Mammary epithelial cell (primary cell): ENCODE measurements at regions of chr16 and their contacts with region 1.

Region 1: GRCh38 chr16:10964039-10964890 is 19.9 kb downstream of the CLEC16A start:
- DNase-seq: peak; percentile 77
- H3K4me3 ChIP-seq: no peak overlapping the region
- H3K27ac ChIP-seq: no peak overlapping the region
- H3K4me1 ChIP-seq: peaks cover 16% of the 10 kb centered on the region
- H3K27me3 ChIP-seq: no peaks in the 10 kb centered on the region
- CTCF ChIP-seq: peak; percentile 96 to 99

Region 2: DNA sequence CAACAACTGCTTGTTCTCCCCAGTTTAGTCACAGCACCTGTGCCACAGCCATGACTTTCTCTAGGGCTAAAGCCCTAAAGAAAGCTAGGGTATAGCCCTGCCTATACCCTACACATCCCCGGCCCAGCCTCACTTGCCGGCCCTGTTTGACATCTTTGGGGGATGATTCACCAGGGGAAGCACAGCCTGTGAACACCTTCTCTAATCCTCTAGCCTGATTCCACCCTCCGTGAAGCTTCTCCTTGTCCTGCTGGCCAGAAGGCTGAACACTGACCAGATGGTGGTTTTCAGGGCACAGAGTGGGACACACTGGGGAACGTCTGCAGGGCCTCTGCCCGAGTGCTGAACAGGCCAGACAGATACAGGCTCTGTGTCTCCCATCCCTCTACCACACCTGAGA is 13.9 kb before region 1 on chr16:
- CTCF ChIA-PET with region 1: no interaction called
- dilution Hi-C with region 1: no loop called
- in situ Hi-C with region 1: no loop called
- intact Hi-C with region 1: loop called (anchors 1 kb)
- DNase-seq: peak; percentile 72
- H3K4me3 ChIP-seq: no peak overlapping the region
- H3K27ac ChIP-seq: peak overlapping the region; percentile 8
- H3K4me1 ChIP-seq: peaks cover 52% of the 10 kb centered on the region
- H3K27me3 ChIP-seq: no peaks in the 10 kb centered on the region
- CTCF ChIP-seq: no peak

Region 3: GRCh38 chr16:11370084-11370931 is 406.0 kb after region 1 on chr16:
- CTCF ChIA-PET with region 1: no interaction called
- dilution Hi-C with region 1: no loop called
- in situ Hi-C with region 1: loop called in 1 of 2 experiments (anchors 10 kb)
- intact Hi-C with region 1: loop called (anchors 1 kb)
- DNase-seq: no peak
- H3K4me3 ChIP-seq: no peak overlapping the region
- H3K27ac ChIP-seq: no peak overlapping the region
- H3K4me1 ChIP-seq: no peaks in the 10 kb centered on the region
- H3K27me3 ChIP-seq: no peaks in the 10 kb centered on the region
- CTCF ChIP-seq: no peak

Region 4: DNA sequence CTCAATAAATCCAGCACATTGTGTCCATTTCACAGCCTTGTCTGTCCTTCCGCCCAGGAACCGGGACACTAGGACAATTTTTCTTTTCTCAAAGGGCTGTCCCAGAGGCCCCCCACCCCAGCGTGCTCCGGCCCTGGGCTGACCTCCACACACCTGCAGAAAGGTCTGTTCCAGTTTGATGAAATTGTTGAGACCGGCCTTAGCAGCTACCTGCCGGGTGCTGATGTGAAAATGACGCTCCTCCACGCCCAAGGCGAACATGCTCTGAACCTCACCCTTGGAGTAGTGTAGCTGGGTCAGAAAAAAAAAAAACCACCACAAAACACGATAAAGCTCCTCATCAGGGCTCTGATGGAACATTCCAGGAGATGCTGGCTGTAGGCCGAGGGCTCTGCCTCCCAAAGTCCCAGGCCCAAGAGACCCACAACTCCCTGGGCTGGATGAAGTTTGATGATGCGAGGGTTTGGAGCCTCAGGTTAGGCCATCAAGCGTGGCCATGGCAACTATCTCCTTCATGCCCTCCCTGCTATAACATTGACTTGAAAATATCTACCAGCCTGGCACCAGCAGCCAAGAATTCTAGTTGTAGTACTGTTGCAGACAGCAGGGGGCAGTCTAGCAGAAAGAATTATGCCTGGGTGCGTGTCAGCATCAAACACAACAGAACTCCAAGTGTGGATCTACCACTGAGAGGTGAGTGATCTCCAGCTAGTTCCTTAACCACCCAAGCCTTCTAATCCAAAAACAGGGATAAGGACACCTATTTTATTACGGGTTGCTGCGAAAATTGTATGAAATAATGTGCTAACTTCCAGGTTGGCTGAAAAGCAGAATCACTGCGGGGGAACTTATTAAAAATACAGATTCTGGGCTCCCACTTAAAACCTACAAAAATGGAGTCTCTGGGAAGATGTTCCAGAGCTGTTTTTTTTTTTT is 443.1 kb after region 1 on chr16:
- CTCF ChIA-PET with region 1: no interaction called
- dilution Hi-C with region 1: no loop called
- in situ Hi-C with region 1: no loop called
- intact Hi-C with region 1: loop called (anchors 1 kb)
- DNase-seq: peak; percentile 65
- H3K4me3 ChIP-seq: no peak overlapping the region
- H3K27ac ChIP-seq: no peak overlapping the region
- H3K4me1 ChIP-seq: no peaks in the 10 kb centered on the region
- H3K27me3 ChIP-seq: no peaks in the 10 kb centered on the region
- CTCF ChIP-seq: peak; percentile 76 to 77

Region 5: DNA sequence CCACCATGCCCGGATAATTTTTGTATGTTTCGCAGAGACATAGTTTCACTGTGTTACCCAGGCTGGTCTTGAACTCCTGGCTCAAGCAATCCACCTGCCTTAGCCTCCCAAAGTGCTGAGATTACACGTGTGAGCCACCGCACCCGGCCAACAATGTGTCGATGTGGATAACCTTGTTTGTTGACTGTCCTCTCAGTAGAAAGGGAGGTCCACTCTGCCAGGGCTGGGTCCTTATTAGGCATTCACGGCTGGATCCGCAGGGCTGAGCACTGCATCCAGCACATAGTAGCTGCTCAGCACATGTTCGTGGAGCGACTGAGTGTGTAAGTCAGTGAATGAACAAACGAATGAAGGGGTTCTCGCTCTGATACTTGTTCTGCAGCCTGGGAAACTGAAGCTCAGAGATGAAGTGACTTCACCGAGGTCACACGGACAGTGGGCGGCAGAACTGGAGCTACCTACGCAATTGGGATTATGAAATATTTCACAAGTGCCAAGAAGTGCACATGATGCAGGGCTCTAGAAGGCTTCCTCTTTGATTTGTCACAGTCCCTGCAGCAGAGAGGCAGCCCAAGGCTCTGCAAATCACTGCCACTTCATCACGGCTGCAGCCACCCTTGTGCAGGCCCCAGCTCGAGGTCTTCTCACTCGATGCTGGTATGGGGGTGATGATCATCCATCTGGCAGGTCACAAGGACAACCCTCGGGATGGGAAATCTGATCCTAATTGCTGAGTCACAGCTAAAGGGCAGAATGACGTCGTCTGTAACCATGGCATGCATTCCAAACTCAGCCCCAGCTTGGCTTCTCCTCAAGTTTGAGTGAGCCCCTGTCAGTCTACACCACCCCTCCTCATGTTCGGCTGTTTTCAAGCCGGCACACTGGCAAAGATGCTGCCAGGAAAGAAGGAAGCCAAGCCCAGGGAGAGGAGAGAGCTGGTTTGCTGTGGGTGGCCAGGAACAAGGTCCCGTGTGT is 675.9 kb after region 1 on chr16:
- CTCF ChIA-PET with region 1: no interaction called
- dilution Hi-C with region 1: no loop called
- in situ Hi-C with region 1: no loop called
- intact Hi-C with region 1: loop called (anchors 10 kb)
- DNase-seq: peak; percentile 95
- H3K4me3 ChIP-seq: no peak overlapping the region
- H3K27ac ChIP-seq: peak overlapping the region; percentile 88
- H3K4me1 ChIP-seq: peaks cover 18% of the 10 kb centered on the region
- H3K27me3 ChIP-seq: no peaks in the 10 kb centered on the region
- CTCF ChIP-seq: no peak

Region 6: GRCh38 chr16:11715246-11715947 is 751.1 kb after region 1 on chr16:
- CTCF ChIA-PET with region 1: no interaction called
- dilution Hi-C with region 1: no loop called
- in situ Hi-C with region 1: loop called in 1 of 2 experiments (anchors 25 kb)
- intact Hi-C with region 1: loop called (anchors 5 kb)
- DNase-seq: no peak
- H3K4me3 ChIP-seq: no peak overlapping the region
- H3K27ac ChIP-seq: no peak overlapping the region
- H3K4me1 ChIP-seq: no peaks in the 10 kb centered on the region
- H3K27me3 ChIP-seq: no peaks in the 10 kb centered on the region
- CTCF ChIP-seq: no peak